Dorsolateral prefrontal cortex (tissue), 120 donors: ENCODE measurements at regions of chr6 and their contacts with region 1.

Region 1: GRCh38 chr6:30742316-30743098 is at the start of gene FLOT1:
- DNase-seq: peak; percentile 83 to 95 (median 90)
- H3K4me3 ChIP-seq: peak within 1 kb of the TSS; percentile 54 to 98 (median 87)
- H3K27ac ChIP-seq: peak within 1 kb of the TSS; percentile 63 to 97 (median 90)
- H3K27me3 ChIP-seq: no peaks in the 10 kb centered on the region
- CTCF ChIP-seq: peak in 21 of 56 donors; percentile 1 to 50 (median 24)
- total RNA-seq, gene FLOT1: 130 to 270 (median 200) TPM

Region 2: GRCh38 chr6:30717042-30717844 is 25.3 kb before region 1 on chr6 and contains the start of gene MDC1:
- intact Hi-C with region 1: loop called in 1 of 2 experiments (anchors 2 kb)
- DNase-seq: peak; percentile 96 to 100 (median 100)
- H3K4me3 ChIP-seq: peak within 1 kb of the TSS; percentile 50 to 95 (median 79)
- H3K27ac ChIP-seq: peak within 1 kb of the TSS; percentile 32 to 98 (median 94)
- H3K27me3 ChIP-seq: no peaks in the 10 kb centered on the region
- CTCF ChIP-seq: peak in 53 of 56 donors; percentile 16 to 71 (median 48)
- total RNA-seq, gene MDC1: 25.7 to 64.4 (median 40.3) TPM

Region 3: GRCh38 chr6:30781743-30782424 is 39.4 kb after region 1 on chr6:
- intact Hi-C with region 1: loop called (anchors 2 to 5 kb)
- DNase-seq: peak; percentile 80 to 92 (median 88)
- H3K4me3 ChIP-seq: peak overlapping the region in 58 of 59 donors; percentile 13 to 65 (median 40)
- H3K27ac ChIP-seq: peak overlapping the region; percentile 71 to 98 (median 90)
- H3K27me3 ChIP-seq: no peaks in the 10 kb centered on the region
- CTCF ChIP-seq: peak in 18 of 56 donors; percentile 7 to 38 (median 22)

Region 4: DNA sequence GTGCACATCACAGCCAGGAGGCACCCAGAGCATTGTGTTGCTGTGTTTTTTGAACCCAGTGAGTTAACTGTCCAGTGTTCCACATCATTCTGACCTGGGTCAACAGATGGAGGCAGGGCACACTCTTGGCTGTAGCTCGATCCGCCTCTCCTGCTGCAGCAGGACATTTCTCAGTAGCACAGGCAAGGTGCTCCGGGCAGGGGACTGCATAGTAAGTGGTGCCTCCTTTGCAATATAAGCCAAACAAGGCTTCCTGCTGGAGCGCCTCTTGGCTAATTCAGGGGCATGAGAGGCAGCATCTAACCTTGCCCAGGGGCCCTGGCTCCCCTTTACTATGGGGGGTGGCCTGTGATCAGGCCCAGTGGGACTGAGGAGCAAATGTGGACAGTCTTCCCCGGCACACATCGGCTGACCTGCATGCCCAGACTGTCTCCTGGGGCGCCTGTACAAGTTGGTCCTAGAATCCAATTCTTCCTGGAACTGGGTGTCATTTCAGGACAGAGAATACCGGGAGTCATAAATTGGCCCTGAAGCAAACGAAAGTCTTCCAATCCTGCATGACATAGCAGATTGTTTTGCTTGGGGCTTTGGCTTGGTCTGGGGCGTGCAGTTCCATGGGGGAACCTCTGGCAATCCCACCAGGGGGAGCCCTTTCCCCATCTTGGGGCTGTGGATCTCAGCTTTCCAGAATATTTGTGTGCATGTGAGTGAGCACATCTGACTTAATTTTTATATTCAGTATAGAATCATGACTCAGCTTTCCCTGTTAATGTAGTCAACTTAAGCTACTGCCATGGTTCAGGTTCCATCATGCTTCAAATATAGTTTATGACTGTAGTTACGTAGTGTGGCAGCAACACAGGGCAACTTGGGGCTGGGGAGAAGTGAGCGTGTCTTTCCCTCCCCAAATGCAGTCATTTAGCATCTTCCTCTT is 85.8 kb after region 1 on chr6:
- intact Hi-C with region 1: loop called (anchors 5 kb)
- DNase-seq: peak; percentile 80 to 91 (median 87)
- H3K4me3 ChIP-seq: peak overlapping the region in 18 of 59 donors; percentile 4 to 50 (median 19)
- H3K27ac ChIP-seq: peak overlapping the region in 50 of 59 donors; percentile 3 to 86 (median 64)
- H3K27me3 ChIP-seq: no peaks in the 10 kb centered on the region
- CTCF ChIP-seq: peak; percentile 75 to 99 (median 96)

Region 5: GRCh38 chr6:30883685-30884520 is 141.4 kb after region 1 on chr6 and contains the start of gene DDR1:
- intact Hi-C with region 1: loop called in 1 of 2 experiments (anchors 5 kb)
- DNase-seq: peak; percentile 68 to 90 (median 78)
- H3K4me3 ChIP-seq: peak within 1 kb of the TSS; percentile 52 to 90 (median 79)
- H3K27ac ChIP-seq: peak within 1 kb of the TSS; percentile 85 to 99 (median 96)
- H3K27me3 ChIP-seq: no peaks in the 10 kb centered on the region
- CTCF ChIP-seq: peak in 1 of 56 donors; percentile 19
- total RNA-seq, gene DDR1: 100 to 498 (median 195) TPM